Caco-2 (cell line): ENCODE measurements at regions of chr15 and their contacts with region 1.

Region 1: GRCh38 chr15:74906446-74907162 is at the start of gene FAM219B:
- DNase-seq: peak; percentile 88 to 93
- H3K4me3 ChIP-seq: peak within 1 kb of the TSS; percentile 79
- H3K4me3 Mint-ChIP-seq: peak within 1 kb of the TSS; percentile 99
- H3K27ac Mint-ChIP-seq: peak within 1 kb of the TSS; percentile 97
- H3K4me1 ChIP-seq: peaks cover 4% of the 10 kb centered on the region; the same call in 1 of the 2 replicates
- H3K4me1 Mint-ChIP-seq: no peaks in the 10 kb centered on the region
- H3K27me3 ChIP-seq: no peaks in the 10 kb centered on the region
- H3K27me3 Mint-ChIP-seq: no peaks in the 10 kb centered on the region
- CTCF ChIP-seq: no peak
- total RNA-seq, gene FAM219B: 73.7 and 75.4 TPM in 2 replicates

Region 2: DNA sequence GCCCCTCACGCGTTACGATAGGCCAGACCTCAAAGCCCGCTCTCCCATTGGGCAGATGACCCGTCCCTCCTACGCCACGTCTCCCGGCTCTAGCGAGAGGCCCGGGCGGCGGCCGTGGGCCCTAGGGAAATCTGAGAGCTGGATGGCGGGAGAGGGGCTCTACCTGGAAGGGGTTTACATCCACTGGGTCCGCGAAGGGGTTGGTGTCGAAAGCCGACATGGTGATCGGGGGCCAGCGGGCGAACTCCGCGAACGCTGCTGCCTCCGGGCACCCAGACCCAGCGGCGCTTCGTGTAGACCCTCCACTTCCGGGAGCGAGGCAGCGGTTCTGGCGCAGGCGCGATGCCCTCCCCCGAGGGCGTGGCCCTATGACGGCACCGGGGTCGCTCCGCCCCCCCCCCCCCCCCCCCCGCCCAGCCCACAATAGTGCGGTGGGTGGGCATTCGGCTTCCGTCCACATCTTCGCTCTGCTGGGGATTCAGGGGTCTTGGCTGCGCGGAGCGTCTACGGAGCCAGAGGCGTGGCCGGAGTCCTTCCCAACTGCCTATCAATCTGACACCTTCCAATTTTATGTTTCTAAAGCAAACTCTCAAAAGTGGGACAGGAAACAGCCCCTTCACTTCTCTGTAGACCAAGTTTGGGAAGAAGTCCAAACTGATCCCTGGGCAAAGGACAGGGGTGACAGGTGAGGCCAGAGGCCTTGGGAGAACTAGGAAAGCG is 33.4 kb before region 1 on chr15 and contains the start of gene SCAMP2:
- CTCF ChIA-PET with region 1: interaction called, 14 read pairs
- POLR2A ChIA-PET with region 1: interaction called, 12 read pairs
- intact Hi-C with region 1: loop called (anchors 5 kb)
- DNase-seq: peak; percentile 92 to 96
- H3K4me3 ChIP-seq: peak within 1 kb of the TSS; percentile 81
- H3K4me3 Mint-ChIP-seq: peak within 1 kb of the TSS; percentile 82
- H3K27ac Mint-ChIP-seq: peak within 1 kb of the TSS; percentile 81
- H3K4me1 ChIP-seq: peaks cover 33% of the 10 kb centered on the region
- H3K4me1 Mint-ChIP-seq: peaks cover 17% of the 10 kb centered on the region
- H3K27me3 ChIP-seq: no peaks in the 10 kb centered on the region
- H3K27me3 Mint-ChIP-seq: no peaks in the 10 kb centered on the region
- CTCF ChIP-seq: no peak
- total RNA-seq, gene SCAMP2: 97.4 and 98.5 TPM in 2 replicates

Region 3: GRCh38 chr15:74889883-74890664 is 16.5 kb before region 1 on chr15 and contains the start of gene MPI:
- CTCF ChIA-PET with region 1: interaction called, 22 read pairs
- POLR2A ChIA-PET with region 1: interaction called, 13 read pairs
- intact Hi-C with region 1: loop called (anchors 1 kb)
- DNase-seq: peak; percentile 86 to 87
- H3K4me3 ChIP-seq: peak within 1 kb of the TSS; percentile 95
- H3K4me3 Mint-ChIP-seq: peak within 1 kb of the TSS; percentile 75
- H3K27ac Mint-ChIP-seq: peak within 1 kb of the TSS; percentile 64
- H3K4me1 ChIP-seq: peaks cover 11% of the 10 kb centered on the region; the same call in 1 of the 2 replicates
- H3K4me1 Mint-ChIP-seq: peaks cover 11% of the 10 kb centered on the region
- H3K27me3 ChIP-seq: no peaks in the 10 kb centered on the region
- H3K27me3 Mint-ChIP-seq: no peaks in the 10 kb centered on the region
- CTCF ChIP-seq: no peak
- total RNA-seq, gene MPI: 29.1 and 32.0 TPM in 2 replicates

Region 4: GRCh38 chr15:74950078-74951000 is 43.7 kb after region 1 on chr15:
- CTCF ChIA-PET with region 1: interaction called, 16 read pairs
- POLR2A ChIA-PET with region 1: interaction called, 5 read pairs
- intact Hi-C with region 1: loop called (anchors 1 kb)
- DNase-seq: peak; percentile 80 to 84
- H3K4me3 ChIP-seq: no peak overlapping the region
- H3K4me3 Mint-ChIP-seq: no peak overlapping the region
- H3K27ac Mint-ChIP-seq: no peak overlapping the region
- H3K4me1 ChIP-seq: peaks cover 14% of the 10 kb centered on the region
- H3K4me1 Mint-ChIP-seq: peaks cover 14% of the 10 kb centered on the region
- H3K27me3 ChIP-seq: no peaks in the 10 kb centered on the region
- H3K27me3 Mint-ChIP-seq: no peaks in the 10 kb centered on the region
- CTCF ChIP-seq: peak; percentile 92 to 96

Region 5: DNA sequence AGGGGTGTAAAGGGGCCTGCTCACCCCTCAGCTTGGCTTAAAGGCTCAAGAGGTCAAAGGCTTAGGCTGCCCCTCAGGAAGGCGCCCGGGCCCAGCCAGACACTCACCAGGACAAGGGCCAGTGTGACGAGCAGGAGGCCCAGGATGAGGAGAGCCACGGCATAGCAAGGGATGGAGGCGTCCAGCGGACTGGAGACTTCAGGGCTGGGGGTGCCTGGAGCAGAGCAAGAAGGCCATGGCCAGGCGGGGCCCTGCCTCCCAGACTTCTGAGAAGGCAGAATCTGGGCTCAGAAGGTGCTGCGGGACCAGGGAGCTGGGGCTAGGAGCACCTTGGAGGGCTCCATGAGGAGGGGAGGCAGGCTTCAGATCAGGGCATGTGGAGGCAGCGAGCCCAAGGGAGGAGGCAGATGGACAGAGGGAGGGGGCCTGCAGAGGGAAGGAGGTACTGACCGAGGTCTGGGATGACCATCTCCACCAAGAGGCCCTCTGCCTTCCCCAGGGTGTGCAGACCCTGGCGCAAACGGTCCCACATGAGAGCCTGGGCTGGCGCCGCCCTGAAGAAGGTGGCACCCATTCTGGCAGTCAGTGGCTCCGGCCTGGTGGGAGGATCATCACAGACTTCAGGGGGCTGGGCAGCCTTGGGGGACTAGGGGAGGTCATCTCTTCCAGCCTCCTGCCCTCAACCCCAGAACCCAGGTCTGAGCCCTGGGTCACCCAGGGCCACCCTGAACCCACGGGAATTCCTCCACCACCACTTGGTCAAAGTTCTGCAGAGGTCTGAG is 319.5 kb after region 1 on chr15:
- CTCF ChIA-PET with region 1: no interaction called
- POLR2A ChIA-PET with region 1: no interaction called
- intact Hi-C with region 1: no loop called
- DNase-seq: peak in 1 of 2 experiments; percentile 19
- H3K4me3 ChIP-seq: no peak overlapping the region
- H3K4me3 Mint-ChIP-seq: no peak overlapping the region
- H3K27ac Mint-ChIP-seq: no peak overlapping the region
- H3K4me1 ChIP-seq: 0 out of 2 replicates have a peak, but pooled peaks cover 5% of the 10 kb centered on the region
- H3K4me1 Mint-ChIP-seq: no peaks in the 10 kb centered on the region
- H3K27me3 ChIP-seq: no peaks in the 10 kb centered on the region
- H3K27me3 Mint-ChIP-seq: no peaks in the 10 kb centered on the region
- CTCF ChIP-seq: no peak